ENCODE measurements at regions of chr11 and their contacts with region 1.

Region 1: DNA sequence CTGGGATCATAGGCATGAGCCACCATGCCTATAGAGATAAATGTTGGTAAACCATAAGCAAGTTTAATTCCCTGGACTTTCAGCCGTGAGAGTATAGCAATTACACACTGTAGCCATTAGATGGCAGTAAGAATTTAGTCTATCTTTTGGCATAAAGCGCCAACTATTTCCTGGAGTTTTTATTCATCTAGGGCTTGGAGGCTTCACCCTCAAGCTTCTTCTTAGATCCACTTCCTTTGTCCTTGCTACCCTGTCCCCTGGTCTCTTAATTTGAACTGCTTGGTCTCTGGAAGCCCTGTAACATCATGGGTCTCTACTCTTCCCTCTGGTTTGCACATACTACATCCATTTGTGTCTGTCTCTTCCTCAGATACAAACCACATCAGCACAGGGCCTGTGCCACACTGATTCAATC is 38.2 kb downstream of the OR10A6 start:
- DNase-seq: peak; percentile 36
- ATAC-seq: peak; percentile 78
- H3K4me3 ChIP-seq: no peak overlapping the region
- H3K27ac ChIP-seq: no peak overlapping the region
- H3K4me1 ChIP-seq: peaks cover 9% of the 10 kb centered on the region; the same call in 1 of the 2 replicates
- H3K27me3 ChIP-seq: peaks cover 0 to 4% of the 10 kb centered on the region in 2 experiments; a peak in 1 of 5 replicates
- CTCF ChIP-seq: peak; percentile 73
- EP300 ChIP-seq: no peak
- POLR2A ChIP-seq: no peak
- RAD21 ChIP-seq: peak; percentile 36; the same call in 1 of the 2 replicates

Region 2: GRCh38 chr11:7986768-7987559 is 94.1 kb after region 1 on chr11 and contains the start of gene EIF3F:
- CTCF ChIA-PET with region 1: interaction called, 31 read pairs
- POLR2A ChIA-PET with region 1: interaction called, 6 read pairs
- in situ Hi-C with region 1: loop called (anchors 5 kb)
- intact Hi-C with region 1: loop called (anchors 1 kb)
- DNase-seq: peak; percentile 99
- ATAC-seq: peak; percentile 98
- H3K4me3 ChIP-seq: peak within 1 kb of the TSS; percentile 84 to 96 (median 92)
- H3K27ac ChIP-seq: peak within 1 kb of the TSS; percentile 60
- H3K4me1 ChIP-seq: peaks cover 25% of the 10 kb centered on the region
- H3K27me3 ChIP-seq: peaks cover 0 to 3% of the 10 kb centered on the region in 2 experiments; a peak in 2 of 5 replicates
- CTCF ChIP-seq: peak; percentile 90
- EP300 ChIP-seq: 0 out of 4 replicates have a peak, but pooled peaks of 1 of the 2 experiments have one; percentile 16
- POLR2A ChIP-seq: peak; percentile 57 to 71; a peak in 3 of 4 replicates
- RAD21 ChIP-seq: peak; percentile 77
- total RNA-seq, gene EIF3F: 187 and 191 TPM in 2 replicates

Region 3: GRCh38 chr11:8099291-8099899 is 206.5 kb after region 1 on chr11:
- CTCF ChIA-PET with region 1: no interaction called
- POLR2A ChIA-PET with region 1: no interaction called
- in situ Hi-C with region 1: no loop called
- intact Hi-C with region 1: loop called (anchors 10 kb)
- DNase-seq: peak; percentile 48
- ATAC-seq: peak; percentile 80
- H3K4me3 ChIP-seq: no peak overlapping the region
- H3K27ac ChIP-seq: no peak overlapping the region
- H3K4me1 ChIP-seq: no peaks in the 10 kb centered on the region
- H3K27me3 ChIP-seq: no peaks in the 10 kb centered on the region
- CTCF ChIP-seq: peak; percentile 80
- EP300 ChIP-seq: no peak
- POLR2A ChIP-seq: no peak
- RAD21 ChIP-seq: peak; percentile 68